ENCODE measurements at regions of chr13 and their contacts with region 1.

Region 1: DNA sequence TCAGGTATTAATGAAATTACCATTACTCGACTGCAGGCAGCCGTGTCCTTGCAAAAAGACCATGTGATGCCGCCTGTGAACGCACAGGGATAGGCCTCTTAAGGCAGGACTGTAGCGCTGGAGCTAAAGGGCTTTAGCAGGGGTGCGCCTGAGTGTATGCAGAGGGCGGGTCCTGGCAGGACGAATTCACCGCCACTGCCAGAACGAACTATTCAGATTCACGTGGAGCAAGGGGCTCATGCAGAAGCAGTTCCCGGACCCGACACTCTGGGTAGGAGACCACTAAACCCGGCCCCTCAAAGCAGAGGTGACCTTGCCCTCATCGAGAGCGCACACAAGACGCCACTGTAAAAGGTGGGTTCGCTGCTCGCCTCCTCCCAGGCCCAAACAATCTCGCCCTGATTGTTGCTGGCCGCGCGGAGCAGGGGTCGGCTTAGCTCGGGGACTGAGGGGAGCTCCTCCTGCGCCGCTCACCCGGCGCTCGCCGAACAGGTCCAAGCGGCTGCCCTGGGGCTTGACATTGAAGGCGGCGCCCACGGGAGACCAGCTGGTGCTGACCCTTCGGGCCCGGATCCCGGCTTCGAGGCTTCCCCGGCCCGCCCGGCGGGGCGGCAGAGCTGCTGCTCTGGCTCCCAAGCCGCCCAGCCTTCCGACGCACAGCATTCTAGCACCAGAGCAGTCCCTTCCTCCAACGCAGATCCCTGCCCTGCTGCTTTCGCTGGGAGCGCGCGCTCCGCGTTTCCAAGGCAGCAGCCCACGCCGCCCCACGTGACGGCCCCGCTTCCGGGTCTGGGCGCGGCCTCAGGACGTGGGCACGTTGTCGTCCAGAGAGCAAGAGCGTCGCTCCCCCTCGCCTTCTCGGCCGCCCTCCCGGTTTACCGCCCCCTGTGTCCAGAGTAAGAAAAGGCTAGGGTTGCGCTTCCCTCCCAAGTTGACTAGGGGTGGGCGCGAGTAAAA is at the start of gene MIPEP:
- DNase-seq: peak; percentile 73 to 95 (median 87)
- ATAC-seq: peak; percentile 93
- H3K4me3 ChIP-seq: peak within 1 kb of the TSS; percentile 79
- H3K4me3 Mint-ChIP-seq: peak within 1 kb of the TSS; percentile 90
- H3K27ac ChIP-seq: peak within 1 kb of the TSS; percentile 61 to 71
- H3K27ac Mint-ChIP-seq: peak within 1 kb of the TSS; percentile 88
- H3K4me1 ChIP-seq: peaks cover 7% of the 10 kb centered on the region
- H3K4me1 Mint-ChIP-seq: peaks cover 23% of the 10 kb centered on the region
- H3K27me3 ChIP-seq: no peaks in the 10 kb centered on the region
- H3K27me3 Mint-ChIP-seq: peaks cover 3% of the 10 kb centered on the region
- CTCF ChIP-seq: peak; percentile 65
- total RNA-seq, gene MIPEP: 3.0 to 3.8 TPM

Region 2: DNA sequence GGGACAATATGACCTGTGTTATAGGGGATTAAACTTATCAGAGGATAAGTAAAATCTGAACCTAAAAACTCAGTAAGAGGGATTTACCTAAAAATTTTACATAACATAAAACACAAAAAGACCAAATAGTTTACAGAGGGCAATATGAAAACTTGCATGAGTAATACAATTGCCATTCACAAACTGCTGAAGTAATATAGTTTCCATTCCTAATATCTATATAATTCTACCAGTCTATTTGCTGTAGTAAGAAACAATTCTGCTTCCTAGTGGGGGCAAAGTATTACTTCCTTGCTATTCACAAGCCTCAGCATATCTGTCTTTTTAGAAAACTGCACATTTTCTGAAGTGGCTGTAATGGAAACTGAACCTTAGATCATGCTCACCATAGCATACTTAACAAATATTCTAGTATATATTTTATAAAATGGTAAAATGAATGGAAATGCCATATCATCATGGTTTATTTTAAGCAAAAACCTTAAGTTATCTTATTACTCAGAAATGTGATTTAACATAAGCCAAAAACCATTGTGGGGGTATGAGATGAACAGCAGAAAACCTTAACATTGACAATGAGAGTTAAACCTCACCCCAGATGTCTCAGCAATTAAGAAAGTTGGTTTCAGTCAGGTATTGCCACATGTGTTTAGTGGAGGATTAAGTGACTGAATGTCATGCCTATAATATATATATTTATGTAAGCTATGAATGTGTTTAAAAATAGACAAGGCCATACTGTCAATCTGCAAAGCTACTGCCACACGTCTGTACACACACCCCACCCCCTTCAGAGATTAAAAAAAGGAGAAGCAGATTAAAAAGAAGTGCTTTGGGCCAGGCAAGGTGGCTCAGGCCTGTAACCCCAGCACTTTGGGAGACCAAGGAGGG is 136.6 kb before region 1 on chr13:
- CTCF ChIA-PET with region 1: no interaction called
- POLR2A ChIA-PET with region 1: no interaction called
- intact Hi-C with region 1: no loop called
- DNase-seq: no peak
- ATAC-seq: no peak
- H3K4me3 ChIP-seq: no peak overlapping the region
- H3K4me3 Mint-ChIP-seq: no peak overlapping the region
- H3K27ac ChIP-seq: no peak overlapping the region
- H3K27ac Mint-ChIP-seq: no peak overlapping the region
- H3K4me1 ChIP-seq: no peaks in the 10 kb centered on the region
- H3K4me1 Mint-ChIP-seq: no peaks in the 10 kb centered on the region
- H3K27me3 ChIP-seq: no peaks in the 10 kb centered on the region
- H3K27me3 Mint-ChIP-seq: no peaks in the 10 kb centered on the region
- CTCF ChIP-seq: no peak

Region 3: GRCh38 chr13:23950736-23951672 is 62.1 kb after region 1 on chr13:
- CTCF ChIA-PET with region 1: no interaction called
- POLR2A ChIA-PET with region 1: no interaction called
- intact Hi-C with region 1: no loop called
- DNase-seq: no peak
- ATAC-seq: no peak
- H3K4me3 ChIP-seq: no peak overlapping the region
- H3K4me3 Mint-ChIP-seq: no peak overlapping the region
- H3K27ac ChIP-seq: no peak overlapping the region
- H3K27ac Mint-ChIP-seq: no peak overlapping the region
- H3K4me1 ChIP-seq: no peaks in the 10 kb centered on the region
- H3K4me1 Mint-ChIP-seq: no peaks in the 10 kb centered on the region
- H3K27me3 ChIP-seq: peaks cover 0 to 3% of the 10 kb centered on the region in 2 experiments
- H3K27me3 Mint-ChIP-seq: peaks cover 9% of the 10 kb centered on the region
- CTCF ChIP-seq: no peak

Region 4: DNA sequence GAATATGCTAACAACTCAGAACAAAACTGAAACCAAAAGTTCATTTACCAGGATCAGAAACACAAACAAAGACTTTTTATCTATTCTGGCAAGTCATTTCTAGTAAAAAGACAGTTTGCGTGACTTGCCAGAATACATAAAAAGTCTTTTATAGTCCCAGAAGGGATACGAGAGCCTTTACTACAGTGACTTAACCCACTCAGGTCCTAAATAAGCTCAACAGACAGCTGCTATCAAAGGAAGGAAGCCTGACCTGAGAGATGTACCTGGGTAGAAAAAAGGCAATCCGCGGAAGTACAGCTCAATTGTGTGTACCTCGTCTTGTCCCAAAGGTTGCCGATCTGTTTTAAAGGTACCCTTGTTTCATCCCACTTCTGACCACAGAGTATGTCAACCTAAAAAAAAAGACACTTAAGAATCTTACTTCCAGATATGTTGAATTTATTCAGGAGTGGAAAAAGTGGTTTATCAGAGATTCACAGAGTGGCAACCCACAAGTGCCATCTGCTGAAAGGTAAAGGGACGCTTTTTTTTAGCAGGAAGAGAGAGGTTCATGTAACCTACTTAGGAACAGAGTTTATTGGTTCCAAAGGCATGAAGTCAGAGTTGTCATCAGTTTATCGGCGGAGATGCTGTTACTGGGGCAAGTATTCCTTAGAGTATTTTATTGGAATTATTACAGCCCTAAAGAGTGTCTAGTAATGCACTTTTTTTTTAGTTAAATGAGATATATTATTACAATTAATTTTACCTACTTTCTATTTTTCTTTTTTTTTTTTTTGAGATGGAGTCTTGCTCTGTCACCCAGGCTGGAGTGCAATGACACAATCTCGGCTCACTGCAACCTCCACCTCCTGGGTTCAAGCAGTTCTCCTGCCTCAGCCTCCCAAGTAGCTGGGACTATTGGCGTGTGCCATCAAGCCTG is 78.0 kb after region 1 on chr13:
- CTCF ChIA-PET with region 1: no interaction called
- POLR2A ChIA-PET with region 1: no interaction called
- intact Hi-C with region 1: loop called in 1 of 2 experiments (anchors 2 kb)
- DNase-seq: peak in 3 of 9 experiments; percentile 23 to 70 (median 56)
- ATAC-seq: peak; percentile 73
- H3K4me3 ChIP-seq: peak overlapping the region; percentile 40 to 57
- H3K4me3 Mint-ChIP-seq: peak overlapping the region; percentile 82
- H3K27ac ChIP-seq: peak overlapping the region; percentile 38 to 89
- H3K27ac Mint-ChIP-seq: peak overlapping the region; percentile 84
- H3K4me1 ChIP-seq: peaks cover 8% of the 10 kb centered on the region
- H3K4me1 Mint-ChIP-seq: peaks cover 15% of the 10 kb centered on the region
- H3K27me3 ChIP-seq: no peaks in the 10 kb centered on the region
- H3K27me3 Mint-ChIP-seq: no peaks in the 10 kb centered on the region
- CTCF ChIP-seq: no peak

Region 5: GRCh38 chr13:23980160-23980551 is 91.2 kb after region 1 on chr13:
- CTCF ChIA-PET with region 1: no interaction called
- POLR2A ChIA-PET with region 1: no interaction called
- intact Hi-C with region 1: loop called in 1 of 2 experiments (anchors 2 kb)
- DNase-seq: peak; percentile 84 to 96 (median 90)
- ATAC-seq: peak; percentile 92
- H3K4me3 ChIP-seq: peak overlapping the region; percentile 56 to 79
- H3K4me3 Mint-ChIP-seq: peak overlapping the region; percentile 86
- H3K27ac ChIP-seq: peak overlapping the region in 1 of 2 experiments; percentile 51
- H3K27ac Mint-ChIP-seq: peak overlapping the region; percentile 34
- H3K4me1 ChIP-seq: peaks cover 10% of the 10 kb centered on the region
- H3K4me1 Mint-ChIP-seq: peaks cover 8% of the 10 kb centered on the region
- H3K27me3 ChIP-seq: peaks cover 8 to 10% of the 10 kb centered on the region in 2 experiments
- H3K27me3 Mint-ChIP-seq: peaks cover 17% of the 10 kb centered on the region
- CTCF ChIP-seq: no peak

Region 6: DNA sequence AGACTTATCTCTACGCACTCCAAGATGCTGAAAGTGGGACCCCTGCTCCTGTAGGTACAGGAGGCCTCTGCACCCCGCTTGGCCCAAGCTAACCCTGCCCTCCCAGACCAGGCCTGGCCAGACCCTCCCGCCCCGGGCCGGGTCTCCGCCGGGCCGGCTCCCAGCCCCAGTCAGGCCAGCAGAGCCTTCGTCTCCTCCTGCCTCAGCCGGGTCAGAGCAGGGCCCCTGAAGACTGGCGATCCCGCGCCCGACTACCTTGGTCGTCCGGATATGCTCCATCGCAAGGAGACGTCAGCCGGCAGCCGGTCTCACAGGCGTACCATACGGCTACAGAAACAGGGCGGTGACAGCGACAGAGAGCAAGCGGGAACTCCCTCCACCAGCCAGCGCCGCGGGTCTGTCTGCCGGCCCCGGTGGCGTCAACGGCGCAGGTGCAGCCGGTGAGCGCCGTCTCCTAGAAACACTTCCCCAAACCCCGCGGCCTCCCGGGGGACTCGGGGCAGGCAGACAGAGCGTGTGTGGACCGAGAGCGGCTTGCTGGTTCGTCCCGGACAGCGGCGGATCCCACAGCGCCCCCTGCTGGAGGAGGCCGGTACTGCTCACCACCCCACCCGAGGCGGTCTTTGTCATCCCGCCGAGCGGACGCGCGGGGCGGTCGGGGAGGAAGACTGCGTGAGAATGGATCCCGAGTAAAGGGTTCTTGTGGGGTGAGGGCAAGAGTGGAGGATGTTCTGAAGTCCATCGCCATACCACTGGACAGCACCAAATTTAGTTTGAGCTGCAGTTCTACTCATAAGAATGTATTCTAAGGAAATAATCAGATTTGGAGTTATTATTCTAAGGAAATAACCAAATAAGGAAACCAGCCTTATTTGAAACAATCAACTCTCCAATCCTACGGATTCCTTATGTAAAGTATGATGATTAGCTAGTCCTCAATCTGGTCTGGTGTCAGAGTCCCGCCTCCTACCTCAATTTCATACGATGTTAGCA is 1398.3 kb after region 1 on chr13 and contains the start of gene MTMR6:
- CTCF ChIA-PET with region 1: no interaction called
- POLR2A ChIA-PET with region 1: no interaction called
- intact Hi-C with region 1: loop called in 1 of 2 experiments (anchors 10 kb)
- DNase-seq: peak; percentile 90 to 98 (median 94)
- ATAC-seq: peak; percentile 81
- H3K4me3 ChIP-seq: peak within 1 kb of the TSS; percentile 83 to 95
- H3K4me3 Mint-ChIP-seq: peak within 1 kb of the TSS; percentile 98
- H3K27ac ChIP-seq: peak within 1 kb of the TSS; percentile 94 to 97
- H3K27ac Mint-ChIP-seq: peak within 1 kb of the TSS; percentile 99
- H3K4me1 ChIP-seq: peaks cover 23% of the 10 kb centered on the region
- H3K4me1 Mint-ChIP-seq: peaks cover 41% of the 10 kb centered on the region
- H3K27me3 ChIP-seq: peaks cover 0 to 2% of the 10 kb centered on the region in 2 experiments
- H3K27me3 Mint-ChIP-seq: peaks cover 10% of the 10 kb centered on the region
- CTCF ChIP-seq: peak; percentile 99
- total RNA-seq, gene MTMR6: 41.9 to 44.4 TPM